GM10248 (cell line): ENCODE measurements at regions of chr11 and their contacts with region 1.

Region 1: DNA sequence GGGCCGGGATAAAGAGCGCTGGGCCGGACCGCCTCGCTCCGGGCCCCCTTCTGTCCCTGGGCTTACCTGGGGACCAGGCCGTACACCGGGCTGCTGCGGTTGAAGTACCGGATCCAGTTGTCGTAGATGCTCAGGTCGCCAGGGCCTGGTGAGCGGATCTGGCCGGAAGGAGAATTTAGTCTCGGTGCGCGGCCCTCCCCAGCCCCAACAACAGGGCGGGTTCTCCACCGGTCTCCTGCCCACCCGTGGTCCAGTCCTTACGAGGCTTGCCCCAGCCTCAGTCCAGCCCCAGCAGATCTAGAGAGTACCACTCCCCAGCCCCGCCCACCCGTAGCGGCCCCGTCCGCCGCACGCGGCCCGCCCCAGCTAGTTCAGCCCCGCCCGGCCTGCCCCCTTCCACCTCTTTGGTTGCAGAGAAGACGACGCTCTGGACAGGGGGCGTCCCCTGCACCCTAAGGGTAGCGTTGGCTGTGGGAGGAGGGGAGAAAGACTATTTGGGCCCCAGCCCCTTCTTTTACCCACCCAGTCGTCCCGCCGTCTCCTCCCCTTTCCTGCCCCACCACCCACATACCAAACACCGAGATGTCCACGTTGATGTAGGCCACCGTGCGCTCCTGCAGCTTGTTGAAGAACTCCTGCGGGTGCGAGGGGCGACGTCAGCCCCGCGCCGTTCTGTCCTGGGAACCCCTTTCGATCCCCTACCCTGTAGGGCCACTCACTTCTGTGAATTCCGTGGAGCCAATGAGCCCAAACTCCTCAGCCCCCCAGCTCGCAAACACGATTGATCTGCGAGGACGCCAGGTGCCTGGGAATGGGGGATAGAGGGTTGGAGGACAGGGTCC is 6.8 kb downstream of the SAC3D1 start:
- DNase-seq: no peak
- CTCF ChIP-seq: no peak

Region 2: DNA sequence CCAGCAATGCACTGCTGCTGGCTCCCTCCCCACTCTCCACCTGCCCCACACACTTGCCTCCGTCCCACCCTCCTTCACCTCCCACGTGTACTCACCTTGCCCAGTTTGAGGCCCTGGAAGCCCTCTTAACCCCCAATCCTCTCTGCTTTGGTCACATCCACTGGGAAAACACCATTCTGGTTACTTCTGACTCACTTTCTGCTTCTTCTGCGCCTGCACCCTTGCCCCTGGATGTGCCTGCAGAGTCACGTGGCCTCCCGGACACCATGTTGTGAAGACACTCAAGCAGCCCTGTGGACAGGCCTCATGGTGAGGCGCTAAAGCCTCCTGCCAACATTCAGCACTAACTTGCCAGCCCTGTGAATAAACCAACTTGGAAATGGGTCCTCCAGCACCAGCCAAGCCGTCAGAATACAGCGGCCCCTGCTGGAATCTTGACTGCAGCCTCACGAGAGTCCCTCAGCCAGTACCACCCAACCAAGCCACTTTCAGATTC is 13.2 kb after region 1 on chr11:
- CTCF ChIA-PET with region 1: interaction called, 11 read pairs
- POLR2A ChIA-PET with region 1: no interaction called
- DNase-seq: no peak
- CTCF ChIP-seq: no peak